Aorta (tissue), 5 donors: ENCODE measurements at regions of chr4 and their contacts with region 1.

Region 1: GRCh38 chr4:141307241-141307689 is 86.6 kb downstream of the ZNF330 start:
- DNase-seq: peak in 1 of 2 donors; percentile 65
- ATAC-seq: no peak
- H3K4me3 ChIP-seq: no peak overlapping the region
- H3K27ac ChIP-seq: no peak overlapping the region
- H3K4me1 ChIP-seq: no peaks in the 10 kb centered on the region
- H3K27me3 ChIP-seq: no peaks in the 10 kb centered on the region

Region 2: GRCh38 chr4:141169391-141169790 is 137.9 kb before region 1 on chr4:
- intact Hi-C with region 1: loop called in 1 of 2 experiments (anchors 10 kb)
- DNase-seq: no peak
- ATAC-seq: no peak
- H3K4me3 ChIP-seq: no peak overlapping the region
- H3K27ac ChIP-seq: no peak overlapping the region
- H3K4me1 ChIP-seq: no peaks in the 10 kb centered on the region
- H3K27me3 ChIP-seq: no peaks in the 10 kb centered on the region

Region 3: DNA sequence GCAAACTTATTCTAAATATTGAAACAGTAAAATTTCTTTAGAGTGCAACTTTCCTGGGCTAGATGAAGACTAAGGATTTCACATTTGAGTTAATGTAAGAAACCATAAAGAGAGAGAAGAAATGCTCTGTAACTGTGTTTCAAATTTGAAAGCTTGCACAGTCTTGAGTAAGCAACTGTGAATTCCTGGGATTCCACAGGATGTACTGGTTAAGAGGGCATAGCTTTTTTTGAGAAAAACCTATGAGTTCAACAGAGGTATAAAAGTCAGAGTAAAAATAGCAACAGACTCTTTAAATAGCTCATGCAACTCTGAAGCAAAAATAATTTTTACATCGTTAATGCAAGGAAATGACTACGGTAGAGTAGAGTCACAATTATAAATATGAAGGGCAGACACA is 61.0 kb before region 1 on chr4:
- intact Hi-C with region 1: no loop called
- DNase-seq: no peak
- ATAC-seq: no peak
- H3K4me3 ChIP-seq: no peak overlapping the region
- H3K27ac ChIP-seq: no peak overlapping the region
- H3K4me1 ChIP-seq: no peaks in the 10 kb centered on the region
- H3K27me3 ChIP-seq: no peaks in the 10 kb centered on the region